Colonic mucosa (tissue), 4 donors: ENCODE measurements at regions of chr7 and their contacts with region 1.

Region 1: DNA sequence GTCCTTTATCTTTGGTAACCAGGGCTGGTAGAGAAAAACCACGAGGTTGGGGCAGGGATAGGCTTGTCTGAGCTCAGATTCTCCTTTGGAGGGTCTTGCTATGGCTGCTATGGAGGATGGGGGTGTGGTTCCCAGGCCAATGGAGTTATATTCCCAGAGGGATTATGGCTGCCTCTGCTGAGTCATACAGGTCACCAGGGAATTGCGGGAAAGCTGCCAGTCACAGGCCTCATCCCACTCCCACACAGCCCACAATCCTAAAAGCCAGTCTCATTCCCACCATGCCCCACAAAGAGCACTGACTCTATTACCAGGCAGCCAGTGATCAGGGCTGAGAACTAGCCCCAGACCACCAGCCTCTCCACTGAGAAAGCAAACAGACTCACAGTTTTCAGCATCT is 316.6 kb upstream of the TMEM229A start:
- DNase-seq: no peak
- H3K4me3 ChIP-seq: no peak overlapping the region
- H3K27ac ChIP-seq: no peak overlapping the region
- H3K4me1 ChIP-seq: no peaks in the 10 kb centered on the region
- H3K27me3 ChIP-seq: no peaks in the 10 kb centered on the region
- CTCF ChIP-seq: no peak

Region 2: DNA sequence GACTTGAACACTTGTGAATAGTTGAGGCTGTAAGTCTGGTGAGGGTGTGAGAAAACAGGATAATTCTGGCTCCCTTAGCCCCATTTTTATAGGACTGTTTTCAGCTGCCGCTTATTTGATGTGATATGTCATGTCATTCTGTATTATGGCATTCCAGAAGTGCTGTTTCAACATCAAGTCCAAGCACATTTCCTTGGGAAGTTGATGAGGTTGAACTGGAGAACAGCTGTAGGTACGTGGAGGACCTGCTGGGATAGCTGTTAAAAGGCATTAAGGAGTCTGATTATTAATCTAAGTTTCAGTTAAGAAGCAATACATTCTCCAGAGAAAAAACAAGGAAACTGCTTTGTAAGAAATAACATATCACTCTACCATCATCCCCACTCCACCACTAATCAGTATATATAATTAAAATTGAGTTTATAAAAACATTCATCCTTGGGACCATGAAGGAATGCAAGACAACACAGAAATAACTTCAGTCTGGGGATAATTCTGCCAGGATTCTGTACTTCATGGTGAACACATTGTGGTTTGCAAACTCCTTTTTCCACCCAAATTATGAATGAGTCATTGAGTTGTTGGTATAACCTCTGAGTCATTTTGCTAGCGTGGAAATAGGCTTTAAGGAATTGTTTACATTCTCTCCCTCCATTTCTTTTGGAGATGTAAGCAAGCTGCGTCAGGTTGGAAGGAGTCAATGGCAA is 276.7 kb before region 1 on chr7:
- intact Hi-C with region 1: loop called (anchors 5 kb)
- DNase-seq: no peak
- H3K4me3 ChIP-seq: no peak overlapping the region
- H3K27ac ChIP-seq: no peak overlapping the region
- H3K4me1 ChIP-seq: no peaks in the 10 kb centered on the region
- H3K27me3 ChIP-seq: no peaks in the 10 kb centered on the region
- CTCF ChIP-seq: no peak